ENCODE measurements at regions of chr6 and their contacts with region 1.

Region 1: GRCh38 chr6:2931970-2932748 is 29.1 kb upstream of the SERPINB9 start:
- H3K4me3 ChIP-seq: no peak overlapping the region
- H3K27ac ChIP-seq: no peak overlapping the region
- H3K4me1 ChIP-seq: no peaks in the 10 kb centered on the region
- CTCF ChIP-seq: peak; percentile 92

Region 2: GRCh38 chr6:2738373-2738979 is 193.7 kb before region 1 on chr6:
- CTCF ChIA-PET with region 1: interaction called, 21 read pairs
- POLR2A ChIA-PET with region 1: no interaction called
- H3K4me3 ChIP-seq: no peak overlapping the region
- H3K27ac ChIP-seq: no peak overlapping the region
- H3K4me1 ChIP-seq: no peaks in the 10 kb centered on the region
- CTCF ChIP-seq: peak; percentile 82

Region 3: GRCh38 chr6:2841264-2842138 is 90.7 kb before region 1 on chr6 and contains the start of gene SERPINB1:
- CTCF ChIA-PET with region 1: interaction called, 205 read pairs
- POLR2A ChIA-PET with region 1: interaction called, 9 read pairs
- H3K4me3 ChIP-seq: peak within 1 kb of the TSS; percentile 49
- H3K27ac ChIP-seq: peak within 1 kb of the TSS; percentile 54; the same call in 1 of the 2 replicates
- H3K4me1 ChIP-seq: peaks cover 25% of the 10 kb centered on the region
- CTCF ChIP-seq: peak; percentile 64

Region 4: DNA sequence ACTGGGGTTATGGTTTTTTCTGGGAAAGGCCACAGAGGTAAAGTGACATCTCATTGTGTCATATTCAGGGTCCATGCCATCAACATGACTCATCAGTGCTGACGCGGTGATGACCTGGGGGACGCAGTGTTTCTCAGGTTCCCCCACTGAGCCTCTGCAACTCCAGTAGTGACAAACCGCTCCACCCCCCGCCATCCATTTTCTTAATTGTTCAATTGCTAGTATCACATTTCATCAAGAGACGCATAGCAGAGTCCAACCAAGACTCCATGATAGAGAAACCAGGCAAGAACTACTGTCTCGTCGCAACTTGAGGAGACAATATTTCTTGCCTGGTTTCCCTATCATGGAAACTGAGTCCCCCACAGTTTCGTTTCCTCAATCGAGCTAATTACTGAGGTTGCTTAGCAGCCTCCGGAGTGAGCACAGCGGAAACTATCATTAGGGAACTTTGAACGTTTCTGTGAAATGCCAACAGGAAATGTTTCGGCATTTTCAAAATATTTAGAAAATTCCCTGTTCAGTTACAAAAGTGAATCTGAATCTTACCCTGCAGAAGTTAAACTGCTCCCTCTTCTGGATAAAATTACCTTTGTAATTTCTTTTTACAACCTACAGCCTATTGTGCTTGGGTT is 78.3 kb before region 1 on chr6:
- CTCF ChIA-PET with region 1: interaction called, 205 read pairs
- POLR2A ChIA-PET with region 1: no interaction called
- H3K4me3 ChIP-seq: peak overlapping the region; percentile 25
- H3K27ac ChIP-seq: no peak overlapping the region
- H3K4me1 ChIP-seq: peaks cover 4% of the 10 kb centered on the region
- CTCF ChIP-seq: peak; percentile 28; the same call in 1 of the 2 replicates

Region 5: GRCh38 chr6:2911171-2911570 is 21.0 kb before region 1 on chr6:
- CTCF ChIA-PET with region 1: interaction called, 25 read pairs
- POLR2A ChIA-PET with region 1: no interaction called
- H3K4me3 ChIP-seq: no peak overlapping the region
- H3K27ac ChIP-seq: no peak overlapping the region
- H3K4me1 ChIP-seq: no peaks in the 10 kb centered on the region
- CTCF ChIP-seq: no peak

Region 6: DNA sequence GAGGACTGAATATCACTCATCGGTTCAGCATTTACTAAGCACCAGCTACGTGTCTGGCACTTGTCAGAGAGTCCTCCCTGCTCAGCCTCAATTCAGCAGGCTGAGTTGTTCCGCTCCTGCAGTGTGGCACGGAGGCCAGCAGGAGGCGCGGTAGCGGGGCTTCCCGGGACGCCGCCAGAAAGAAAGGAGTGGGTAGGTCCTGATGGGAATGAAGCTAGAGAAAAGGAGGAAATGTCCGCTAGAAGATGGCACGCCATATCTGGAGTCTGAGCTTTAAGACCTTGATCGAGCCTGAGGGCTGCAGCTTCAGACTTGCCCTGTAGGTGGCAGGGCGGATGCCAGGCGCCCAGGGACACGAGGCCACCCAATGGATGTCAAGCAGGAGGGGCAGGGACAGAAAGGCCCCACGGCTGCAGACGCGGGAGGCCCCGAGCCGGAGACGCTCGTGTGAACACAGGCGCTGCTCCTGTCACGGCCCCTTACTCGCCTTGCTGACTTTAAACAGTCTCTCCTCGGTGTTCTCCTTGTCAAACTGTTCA is 20.5 kb after region 1 on chr6:
- CTCF ChIA-PET with region 1: interaction called, 10 read pairs
- POLR2A ChIA-PET with region 1: no interaction called
- H3K4me3 ChIP-seq: no peak overlapping the region
- H3K27ac ChIP-seq: no peak overlapping the region
- H3K4me1 ChIP-seq: no peaks in the 10 kb centered on the region
- CTCF ChIP-seq: peak; percentile 74